ENCODE measurements at regions of chr17 and their contacts with region 1.

Region 1: GRCh38 chr17:78019367-78019975 is 61.0 kb downstream of the TNRC6C start:
- DNase-seq: no peak
- H3K4me3 ChIP-seq: no peak overlapping the region
- H3K27ac ChIP-seq: no peak overlapping the region
- H3K4me1 ChIP-seq: peaks cover 0 to 9% (median 0%) of the 10 kb centered on the region in 4 donors
- H3K27me3 ChIP-seq: no peaks in the 10 kb centered on the region
- CTCF ChIP-seq: peak; percentile 13 to 56 (median 46)
- EP300 ChIP-seq: no peak
- POLR2A ChIP-seq: no peak

Region 2: DNA sequence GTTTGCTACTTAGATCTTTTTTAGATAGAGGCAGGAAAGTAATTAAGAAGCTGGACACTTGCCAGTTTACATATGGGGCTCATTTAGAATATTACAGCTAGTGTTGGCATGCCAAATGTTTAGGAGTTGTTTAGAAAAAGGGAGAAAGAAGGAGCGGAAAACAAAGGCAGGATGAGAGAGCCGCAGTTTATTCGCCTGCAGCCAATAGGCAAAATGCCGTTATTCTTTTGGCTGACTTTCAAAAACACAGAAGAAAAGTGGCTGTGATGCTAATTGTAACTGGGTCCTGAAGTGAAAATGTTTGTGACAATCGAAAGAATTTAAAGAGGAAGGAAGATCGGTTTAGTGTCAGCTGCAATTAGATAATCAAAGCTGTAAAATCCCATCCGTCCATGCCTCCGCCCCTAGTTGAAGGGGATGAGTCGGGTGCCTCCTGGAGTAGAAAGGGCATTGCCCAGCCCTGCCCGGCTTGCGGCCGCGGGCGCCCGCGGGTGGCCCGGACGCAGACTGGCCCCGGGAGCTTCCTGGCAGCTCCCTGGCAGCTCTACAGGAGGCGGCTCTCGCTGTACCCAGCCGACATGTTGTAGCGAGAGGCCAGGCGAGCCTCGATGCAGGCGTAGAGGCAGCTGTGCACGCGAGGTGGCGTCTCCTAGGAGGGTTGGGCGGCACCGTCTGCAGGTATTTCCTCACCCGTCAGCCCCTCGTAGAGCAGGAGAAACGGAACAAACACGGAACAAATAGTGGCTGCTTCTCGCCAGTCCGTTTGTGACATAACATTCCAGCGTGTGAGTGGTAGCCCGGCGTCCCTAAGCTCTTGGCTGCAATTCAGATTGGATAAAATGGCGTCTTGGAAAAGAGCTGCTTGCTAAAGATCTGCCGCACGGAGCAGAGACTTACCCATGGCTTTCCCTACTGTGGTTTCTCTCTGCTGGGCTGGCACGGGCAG is 21.2 kb after region 1 on chr17:
- intact Hi-C with region 1: loop called (anchors 2 kb)
- DNase-seq: peak; percentile 80
- H3K4me3 ChIP-seq: peak overlapping the region; percentile 26 to 56 (median 50)
- H3K27ac ChIP-seq: peak overlapping the region; percentile 83 to 93 (median 86)
- H3K4me1 ChIP-seq: peaks cover 0 to 30% (median 28%) of the 10 kb centered on the region in 4 donors
- H3K27me3 ChIP-seq: no peaks in the 10 kb centered on the region
- CTCF ChIP-seq: peak in 1 of 4 experiments; percentile 12
- EP300 ChIP-seq: no peak
- POLR2A ChIP-seq: no peak

Region 3: DNA sequence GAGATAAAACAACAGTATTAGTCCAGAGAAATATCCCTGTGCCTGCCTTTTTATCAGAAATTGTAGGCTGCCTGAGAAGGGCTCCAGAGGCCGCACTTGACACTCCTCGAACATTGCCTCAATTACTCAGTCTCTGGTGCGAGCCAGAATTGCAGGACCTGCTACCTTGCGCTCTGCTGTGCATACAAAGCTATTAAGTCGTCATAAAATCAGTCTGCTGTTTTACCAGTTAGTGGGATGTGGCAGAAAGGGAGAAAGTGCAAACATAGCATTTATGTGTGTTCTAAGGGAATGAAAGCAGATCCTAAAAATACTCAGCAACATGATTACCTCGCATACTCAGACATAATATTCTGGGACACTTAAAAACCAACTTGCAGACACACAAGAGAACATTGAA is 38.5 kb after region 1 on chr17:
- intact Hi-C with region 1: no loop called
- DNase-seq: no peak
- H3K4me3 ChIP-seq: no peak overlapping the region
- H3K27ac ChIP-seq: peak overlapping the region in 1 of 4 donors; percentile 42
- H3K4me1 ChIP-seq: peaks cover 0 to 13% (median 3%) of the 10 kb centered on the region in 4 donors
- H3K27me3 ChIP-seq: no peaks in the 10 kb centered on the region
- CTCF ChIP-seq: no peak
- EP300 ChIP-seq: no peak
- POLR2A ChIP-seq: no peak

Measured in sigmoid colon (tissue), 7 donors.